Activated CD4-positive, alpha-beta memory T cell treated with anti-CD3 and anti-CD28 coated beads, Interleukin-2, amount 10 ng/mL, durations not matched to agents 7 days and 5 days (primary cell): ENCODE measurements at regions of chr5 and their contacts with region 1.

Region 1: GRCh38 chr5:141976176-141976575 is 7.3 kb downstream of the RNF14 start:
- DNase-seq: no peak
- H3K4me3 Mint-ChIP-seq: no peak overlapping the region
- H3K27ac Mint-ChIP-seq: no peak overlapping the region
- H3K4me1 Mint-ChIP-seq: peaks cover 21% of the 10 kb centered on the region
- H3K27me3 Mint-ChIP-seq: no peaks in the 10 kb centered on the region

Region 2: DNA sequence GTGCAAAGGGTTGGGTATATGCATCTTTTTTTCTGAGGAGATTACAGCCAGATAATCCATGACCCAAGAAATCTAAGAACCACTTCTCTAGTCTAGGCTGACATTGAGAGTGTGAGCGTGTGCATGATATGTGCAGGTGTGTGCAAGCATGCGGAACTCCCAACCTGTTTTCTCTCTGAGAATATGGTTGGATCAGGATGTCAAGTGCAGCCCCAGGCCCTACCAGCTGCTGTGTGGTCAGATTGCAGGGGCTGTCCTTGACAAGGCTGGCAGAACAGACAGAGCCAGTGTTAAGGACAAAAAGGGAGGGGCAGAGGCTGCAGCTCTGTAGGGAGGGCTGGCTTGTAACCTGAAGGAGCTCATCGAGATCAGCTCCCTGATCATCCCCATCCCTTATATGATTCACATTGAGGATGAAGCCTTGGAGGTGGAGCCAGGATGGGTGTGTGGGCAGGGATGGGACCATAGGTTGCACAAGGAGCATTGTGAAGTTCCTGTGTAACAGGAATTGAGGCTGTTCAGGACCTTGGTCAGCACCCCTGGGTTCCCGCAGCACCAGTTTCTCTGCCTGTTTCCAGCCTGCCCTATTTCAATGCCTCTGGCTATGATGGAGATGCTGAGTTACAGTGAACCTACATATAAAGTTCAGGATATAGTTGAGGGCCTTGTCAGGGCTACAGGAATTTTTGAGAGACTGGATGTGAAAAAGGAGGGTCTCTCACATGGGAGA is 241.5 kb before region 1 on chr5:
- CTCF ChIA-PET with region 1: no interaction called
- POLR2A ChIA-PET with region 1: no interaction called
- DNase-seq: peak; percentile 53
- H3K4me3 Mint-ChIP-seq: no peak overlapping the region
- H3K27ac Mint-ChIP-seq: no peak overlapping the region
- H3K4me1 Mint-ChIP-seq: peaks cover 1% of the 10 kb centered on the region
- H3K27me3 Mint-ChIP-seq: peaks cover 19% of the 10 kb centered on the region

Region 3: GRCh38 chr5:141992349-141992963 is 16.3 kb after region 1 on chr5:
- CTCF ChIA-PET with region 1: interaction called, 47 read pairs
- POLR2A ChIA-PET with region 1: interaction called, 3 read pairs
- DNase-seq: peak; percentile 79
- H3K4me3 Mint-ChIP-seq: no peak overlapping the region
- H3K27ac Mint-ChIP-seq: no peak overlapping the region
- H3K4me1 Mint-ChIP-seq: peaks cover 2% of the 10 kb centered on the region
- H3K27me3 Mint-ChIP-seq: no peaks in the 10 kb centered on the region

Region 4: DNA sequence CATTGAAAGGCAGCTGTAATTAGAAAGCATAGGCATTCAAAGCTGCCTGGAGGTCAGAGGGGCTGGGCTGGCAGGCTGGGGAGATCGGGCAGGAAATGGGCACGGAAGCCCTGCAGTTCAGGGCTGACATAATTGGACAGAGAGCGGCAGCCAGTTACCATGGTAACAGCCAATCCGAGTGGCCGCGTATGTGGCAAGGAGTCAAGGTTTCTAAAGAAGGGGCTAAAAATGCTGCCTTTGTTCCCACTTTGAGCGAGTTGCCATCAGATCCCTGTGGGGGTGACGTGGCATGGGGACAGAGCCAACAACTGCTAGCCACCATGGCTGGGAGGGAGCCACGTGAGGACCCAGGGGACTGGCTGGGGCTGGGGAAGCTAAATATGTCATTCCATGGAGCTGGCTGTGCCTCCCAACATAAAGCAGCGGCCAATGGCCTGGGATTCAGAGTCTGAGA is 87.7 kb after region 1 on chr5:
- CTCF ChIA-PET with region 1: no interaction called
- POLR2A ChIA-PET with region 1: no interaction called
- DNase-seq: peak; percentile 46
- H3K4me3 Mint-ChIP-seq: no peak overlapping the region
- H3K27ac Mint-ChIP-seq: no peak overlapping the region
- H3K4me1 Mint-ChIP-seq: peaks cover 11% of the 10 kb centered on the region
- H3K27me3 Mint-ChIP-seq: peaks cover 6% of the 10 kb centered on the region